PC-9 (cell line): ENCODE measurements at regions of chr3 and their contacts with region 1.

Region 1: DNA sequence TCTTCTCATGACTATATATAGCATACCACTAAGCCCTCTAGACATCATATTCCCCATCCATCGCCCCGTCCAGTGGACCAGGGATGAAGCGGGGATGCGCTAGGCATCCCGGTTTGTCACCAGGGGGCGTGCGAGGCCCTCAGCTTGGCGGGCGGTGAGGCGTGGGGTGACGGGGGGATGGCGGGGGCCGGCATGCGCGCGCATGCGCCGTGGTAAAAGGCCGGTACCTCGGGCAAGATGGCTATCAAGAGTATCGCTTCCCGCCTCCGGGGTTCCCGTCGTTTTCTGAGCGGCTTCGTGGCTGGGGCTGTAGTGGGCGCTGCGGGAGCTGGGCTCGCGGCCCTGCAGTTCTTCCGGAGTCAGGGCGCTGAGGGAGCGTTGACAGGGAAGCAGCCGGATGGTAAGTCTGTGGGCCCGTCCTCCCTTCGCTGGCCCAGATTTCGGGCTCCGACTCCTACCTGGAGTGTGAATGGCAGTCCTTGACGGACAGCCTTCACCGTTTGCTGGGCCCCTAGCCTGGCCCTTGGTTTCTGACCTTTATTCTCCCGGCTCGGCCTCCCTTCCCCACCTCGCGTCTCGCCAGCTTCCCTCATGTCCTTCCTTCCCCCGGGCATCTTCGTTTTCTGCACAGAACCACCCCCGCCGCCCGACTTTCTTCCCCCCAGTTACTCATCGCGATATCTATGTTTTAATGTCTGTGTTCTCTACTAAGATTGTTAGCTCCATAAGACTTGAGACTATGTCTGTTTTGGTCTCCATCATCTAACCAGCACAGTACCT is at the start of gene EXOG:
- DNase-seq: peak; percentile 71 to 88
- H3K4me3 ChIP-seq: peak within 1 kb of the TSS; percentile 88
- H3K27ac ChIP-seq: no peak within 1 kb of the TSS
- H3K4me1 ChIP-seq: 0 out of 2 replicates have a peak, but pooled peaks cover 4% of the 10 kb centered on the region
- H3K27me3 ChIP-seq: no peaks in the 10 kb centered on the region
- CTCF ChIP-seq: peak; percentile 85
- total RNA-seq, gene EXOG: 7.5 and 9.3 TPM in 2 replicates

Region 2: DNA sequence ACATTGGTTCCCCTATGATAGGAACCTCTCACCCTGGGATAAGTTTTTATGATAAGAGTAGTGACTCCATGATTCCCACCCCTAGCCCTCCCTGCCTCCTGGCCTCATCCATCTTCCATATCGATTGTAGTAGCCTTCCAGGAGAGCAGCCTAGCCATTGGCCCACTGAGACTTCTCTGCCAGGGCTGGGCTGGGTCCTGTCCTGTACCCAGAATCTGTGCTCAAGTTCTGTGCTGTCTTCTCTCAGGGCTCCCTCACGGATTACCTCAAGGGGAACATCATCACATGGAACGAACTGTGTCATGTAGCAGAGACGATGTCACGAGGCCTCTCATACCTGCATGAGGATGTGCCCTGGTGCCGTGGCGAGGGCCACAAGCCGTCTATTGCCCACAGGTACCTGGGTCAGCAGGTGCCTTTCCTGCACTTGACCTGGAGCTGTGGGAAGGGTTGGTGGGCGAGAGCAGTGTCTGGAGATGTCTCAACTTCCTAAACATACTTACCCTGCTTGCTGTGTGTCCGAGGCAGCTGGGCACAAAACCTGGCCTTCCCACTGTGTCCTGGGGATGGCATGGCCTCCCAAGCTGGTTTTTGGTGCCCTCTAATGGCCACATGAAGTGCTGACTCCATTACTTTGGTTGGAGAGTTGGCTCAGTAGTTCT is 16.8 kb before region 1 on chr3:
- CTCF ChIA-PET with region 1: no interaction called
- POLR2A ChIA-PET with region 1: no interaction called
- intact Hi-C with region 1: no loop called
- DNase-seq: peak in 1 of 2 experiments; percentile 50
- H3K4me3 ChIP-seq: no peak overlapping the region
- H3K27ac ChIP-seq: no peak overlapping the region
- H3K4me1 ChIP-seq: no peaks in the 10 kb centered on the region
- H3K27me3 ChIP-seq: no peaks in the 10 kb centered on the region
- CTCF ChIP-seq: peak; percentile 79

Region 3: DNA sequence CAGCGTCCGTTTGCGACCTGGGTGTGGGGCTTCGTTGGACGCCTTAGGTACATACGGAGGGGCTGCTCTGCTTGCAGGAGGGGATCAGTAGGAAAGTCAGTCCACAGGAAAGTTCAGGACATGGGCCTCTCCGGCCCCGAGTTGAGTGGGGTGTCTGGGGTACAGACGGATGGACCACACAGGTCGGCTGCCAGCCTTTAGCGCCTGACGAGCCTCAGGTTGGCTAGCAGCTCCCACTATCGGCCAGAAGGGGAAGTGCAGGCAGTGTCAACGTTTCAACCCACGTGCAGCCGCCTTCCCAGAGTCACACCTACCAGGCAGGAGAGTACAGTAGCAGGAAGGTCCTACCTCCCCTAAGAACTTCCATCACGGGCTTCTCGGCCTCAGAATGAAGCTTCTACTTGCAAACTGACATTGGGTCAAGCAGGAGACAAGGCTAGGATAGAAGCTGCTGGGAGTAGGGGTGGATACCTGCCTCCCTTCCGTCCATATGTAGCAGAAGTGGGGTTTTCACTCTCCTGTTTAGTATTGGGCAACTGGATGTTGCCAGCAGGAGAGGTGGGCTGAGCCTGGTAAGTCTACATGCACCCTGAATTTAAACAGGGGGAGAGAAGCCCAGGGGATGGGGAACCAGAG is 155.0 kb after region 1 on chr3:
- CTCF ChIA-PET with region 1: interaction called, 12 read pairs
- POLR2A ChIA-PET with region 1: interaction called, 4 read pairs
- intact Hi-C with region 1: loop called (anchors 2 kb)
- DNase-seq: peak in 1 of 2 experiments; percentile 50
- H3K4me3 ChIP-seq: no peak overlapping the region
- H3K27ac ChIP-seq: no peak overlapping the region
- H3K4me1 ChIP-seq: no peaks in the 10 kb centered on the region
- H3K27me3 ChIP-seq: no peaks in the 10 kb centered on the region; the same call in 1 of the 2 replicates
- CTCF ChIP-seq: peak; percentile 83

Region 4: GRCh38 chr3:38662544-38662943 is 166.2 kb after region 1 on chr3:
- CTCF ChIA-PET with region 1: interaction called, 3 read pairs
- POLR2A ChIA-PET with region 1: no interaction called
- intact Hi-C with region 1: loop called (anchors 1 kb)
- DNase-seq: peak; percentile 26 to 46
- H3K4me3 ChIP-seq: no peak overlapping the region
- H3K27ac ChIP-seq: no peak overlapping the region
- H3K4me1 ChIP-seq: no peaks in the 10 kb centered on the region
- H3K27me3 ChIP-seq: peaks cover 25% of the 10 kb centered on the region
- CTCF ChIP-seq: peak; percentile 74